Dorsolateral prefrontal cortex (tissue), 120 donors: ENCODE measurements at regions of chr7 and their contacts with region 1.

Region 1: GRCh38 chr7:73894733-73895551 is 34.0 kb downstream of the TMEM270 start:
- DNase-seq: no peak
- H3K4me3 ChIP-seq: no peak overlapping the region
- H3K27ac ChIP-seq: peak overlapping the region in 1 of 59 donors; percentile 9
- H3K27me3 ChIP-seq: peaks cover 0 to 6% (median 0%) of the 10 kb centered on the region in 45 donors
- CTCF ChIP-seq: no peak

Region 2: GRCh38 chr7:73960548-73960947 is 65.6 kb after region 1 on chr7:
- intact Hi-C with region 1: loop called in 1 of 2 experiments (anchors 10 kb)
- DNase-seq: no peak
- H3K4me3 ChIP-seq: no peak overlapping the region
- H3K27ac ChIP-seq: no peak overlapping the region
- H3K27me3 ChIP-seq: no peaks in the 10 kb centered on the region
- CTCF ChIP-seq: no peak

Region 3: GRCh38 chr7:74012842-74013249 is 117.9 kb after region 1 on chr7:
- intact Hi-C with region 1: loop called in 1 of 2 experiments (anchors 10 kb)
- DNase-seq: no peak
- H3K4me3 ChIP-seq: no peak overlapping the region
- H3K27ac ChIP-seq: peak overlapping the region in 2 of 59 donors; percentile 31 to 47
- H3K27me3 ChIP-seq: no peaks in the 10 kb centered on the region
- CTCF ChIP-seq: no peak